ENCODE measurements at regions of chr4 and their contacts with region 1.

Region 1: DNA sequence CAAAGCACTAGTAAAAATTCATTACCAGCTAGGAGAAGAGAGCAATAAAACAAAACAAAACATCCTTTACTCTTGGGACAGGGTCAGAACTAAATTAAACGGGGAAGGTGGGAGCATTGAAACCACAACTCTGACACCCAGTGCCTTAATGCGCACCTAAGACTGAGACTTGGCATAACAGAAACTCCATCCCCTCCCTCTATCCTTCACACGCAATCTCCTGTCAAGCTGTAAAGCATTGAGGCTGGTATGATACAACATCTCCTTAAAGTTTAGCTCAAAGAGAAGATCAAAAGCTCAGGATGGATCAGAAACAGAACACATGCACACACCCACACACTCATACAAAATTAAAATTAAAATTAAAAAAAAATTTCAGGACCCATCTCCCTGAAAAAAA is 951.3 kb downstream of the STIM2 start:
- DNase-seq: no peak
- H3K4me3 Mint-ChIP-seq: no peak overlapping the region
- H3K27ac Mint-ChIP-seq: no peak overlapping the region
- H3K4me1 Mint-ChIP-seq: no peaks in the 10 kb centered on the region
- H3K27me3 Mint-ChIP-seq: no peaks in the 10 kb centered on the region
- CTCF ChIP-seq: no peak

Region 2: GRCh38 chr4:27702730-27703431 is 109.1 kb before region 1 on chr4:
- CTCF ChIA-PET with region 1: no interaction called
- intact Hi-C with region 1: no loop called
- DNase-seq: peak; percentile 16
- H3K4me3 Mint-ChIP-seq: no peak overlapping the region
- H3K27ac Mint-ChIP-seq: no peak overlapping the region
- H3K4me1 Mint-ChIP-seq: no peaks in the 10 kb centered on the region
- H3K27me3 Mint-ChIP-seq: no peaks in the 10 kb centered on the region
- CTCF ChIP-seq: no peak

Region 3: GRCh38 chr4:27846951-27847350 is 35.0 kb after region 1 on chr4:
- CTCF ChIA-PET with region 1: interaction called, 4 read pairs
- intact Hi-C with region 1: loop called (anchors 2 kb)
- DNase-seq: no peak
- H3K4me3 Mint-ChIP-seq: no peak overlapping the region
- H3K27ac Mint-ChIP-seq: no peak overlapping the region
- H3K4me1 Mint-ChIP-seq: no peaks in the 10 kb centered on the region
- H3K27me3 Mint-ChIP-seq: no peaks in the 10 kb centered on the region
- CTCF ChIP-seq: no peak